Uterus (tissue), 4 donors: ENCODE measurements at regions of chr12 and their contacts with region 1.

Region 1: GRCh38 chr12:56224102-56224701 is at the start of gene NABP2:
- DNase-seq: peak; percentile 98
- H3K4me3 ChIP-seq: peak within 1 kb of the TSS; percentile 59 to 60
- H3K27ac ChIP-seq: peak within 1 kb of the TSS; percentile 98 to 99
- H3K4me1 ChIP-seq: peaks cover 8% of the 10 kb centered on the region in 2 donors
- H3K27me3 ChIP-seq: no peaks in the 10 kb centered on the region
- CTCF ChIP-seq: peak; percentile 84 to 98 (median 94)
- POLR2A ChIP-seq: peak; percentile 51 to 60
- total RNA-seq, gene NABP2: 5.0 to 28.4 (median 12.2) TPM

Region 2: GRCh38 chr12:56117778-56118687 is 106.2 kb before region 1 on chr12 and contains the start of gene ZC3H10:
- intact Hi-C with region 1: loop called (anchors 5 kb)
- DNase-seq: peak; percentile 97 to 99
- H3K4me3 ChIP-seq: peak within 1 kb of the TSS; percentile 89 to 91
- H3K27ac ChIP-seq: peak within 1 kb of the TSS; percentile 98
- H3K4me1 ChIP-seq: peaks cover 5 to 14% of the 10 kb centered on the region in 2 donors
- H3K27me3 ChIP-seq: no peaks in the 10 kb centered on the region
- CTCF ChIP-seq: peak; percentile 48 to 77 (median 64)
- POLR2A ChIP-seq: peak; percentile 95
- total RNA-seq, gene ZC3H10: 1.3 to 9.8 (median 4.2) TPM

Region 3: GRCh38 chr12:56271031-56271430 is 46.8 kb after region 1 on chr12:
- intact Hi-C with region 1: no loop called
- DNase-seq: no peak
- H3K4me3 ChIP-seq: no peak overlapping the region
- H3K27ac ChIP-seq: no peak overlapping the region
- H3K4me1 ChIP-seq: peaks cover 0 to 8% of the 10 kb centered on the region in 2 donors
- H3K27me3 ChIP-seq: no peaks in the 10 kb centered on the region
- CTCF ChIP-seq: peak in 1 of 4 experiments; percentile 18
- POLR2A ChIP-seq: no peak